BJ (cell line): ENCODE measurements at regions of chr20 and their contacts with region 1.

Region 1: GRCh38 chr20:46078954-46079353 is 10.8 kb downstream of the NCOA5 start:
- DNase-seq: no peak
- H3K4me3 ChIP-seq: no peak overlapping the region
- H3K27me3 ChIP-seq: no peaks in the 10 kb centered on the region
- CTCF ChIP-seq: no peak

Region 2: GRCh38 chr20:45833030-45833882 is 245.7 kb before region 1 on chr20 and contains the start of gene SNX21:
- CTCF ChIA-PET with region 1: no interaction called
- POLR2A ChIA-PET with region 1: no interaction called
- DNase-seq: peak; percentile 76
- H3K4me3 ChIP-seq: peak within 1 kb of the TSS; percentile 69
- H3K27me3 ChIP-seq: no peaks in the 10 kb centered on the region
- CTCF ChIP-seq: no peak
- polyA plus RNA-seq, gene SNX21: 13.6 and 17.8 TPM in 2 replicates

Region 3: DNA sequence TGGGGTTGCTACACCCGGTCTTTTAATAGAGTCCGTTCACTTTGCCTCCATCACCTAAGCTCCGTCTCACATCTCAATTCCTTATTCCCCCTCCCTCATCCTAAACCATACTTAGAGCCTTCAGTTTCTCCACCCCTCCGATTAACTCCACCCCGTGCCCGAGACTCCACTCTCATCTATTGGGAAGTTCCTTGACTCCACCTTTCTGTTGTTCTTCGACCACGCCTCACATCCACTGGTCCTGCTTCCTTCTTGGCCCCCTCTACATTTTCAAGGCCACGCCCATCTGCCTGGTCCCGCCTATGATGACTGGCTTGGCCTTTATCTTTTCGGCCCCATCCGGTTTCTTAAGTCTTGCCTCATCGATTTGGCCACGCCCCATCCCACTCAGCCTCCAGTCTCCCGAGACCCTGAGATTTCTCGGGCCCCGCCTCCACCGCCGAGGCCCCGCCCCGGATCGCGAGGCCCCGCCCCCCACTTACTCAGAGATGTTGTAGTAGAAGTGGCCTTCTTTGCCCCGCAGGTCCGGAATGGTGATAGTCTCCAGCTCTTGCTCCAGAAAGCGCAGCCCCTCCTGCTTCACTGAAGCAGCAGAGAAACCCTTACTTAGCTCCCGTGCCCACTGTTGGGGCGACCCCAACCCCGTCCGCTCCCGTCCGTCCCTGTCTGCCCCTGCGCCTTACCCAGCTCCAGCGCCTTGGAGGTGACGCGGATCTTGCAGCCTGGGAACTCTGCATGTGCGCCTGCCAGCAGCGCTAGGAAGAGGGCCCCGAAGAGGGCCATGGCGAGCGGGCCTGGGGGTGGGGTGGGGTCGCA is 168.1 kb before region 1 on chr20:
- CTCF ChIA-PET with region 1: no interaction called
- POLR2A ChIA-PET with region 1: no interaction called
- DNase-seq: peak; percentile 99
- H3K4me3 ChIP-seq: peak overlapping the region; percentile 25
- H3K27me3 ChIP-seq: no peaks in the 10 kb centered on the region
- CTCF ChIP-seq: no peak

Region 4: DNA sequence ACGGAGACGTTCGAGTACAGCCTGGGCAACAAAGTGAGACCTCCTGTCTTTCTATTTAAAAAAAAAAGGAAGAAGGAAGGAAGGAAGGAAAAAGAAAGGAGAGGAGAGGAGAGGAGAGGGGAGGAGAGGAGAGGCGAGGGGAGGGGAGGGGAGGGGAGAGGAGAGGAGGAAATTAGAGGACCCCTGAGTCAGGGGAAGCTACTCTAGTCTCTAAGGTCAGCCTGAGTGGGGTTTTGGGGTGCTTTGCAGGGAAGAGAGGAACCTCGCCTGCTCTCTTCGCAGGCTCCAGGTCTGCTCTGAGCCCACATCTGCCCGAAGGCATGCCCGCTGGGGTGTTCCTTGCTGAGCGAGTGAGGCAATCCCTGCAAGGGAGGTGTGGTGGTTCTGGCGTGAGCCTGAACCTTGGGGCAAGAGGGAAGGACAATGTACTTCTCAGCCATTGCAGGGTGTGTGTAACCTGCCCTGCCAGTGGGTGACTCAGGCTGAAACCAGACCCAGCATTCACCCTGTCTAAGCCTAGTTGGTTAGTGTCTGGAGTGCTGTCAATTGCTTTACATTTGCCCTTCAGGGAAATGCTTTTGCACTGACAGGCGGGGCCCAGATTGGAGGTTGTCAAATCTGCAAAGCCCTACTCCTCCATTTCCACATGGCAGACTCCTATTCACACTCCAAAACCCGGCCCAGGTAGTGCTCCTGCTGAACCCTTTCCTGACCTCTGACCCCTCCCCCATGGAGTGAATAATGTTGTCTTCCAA is 85.6 kb before region 1 on chr20:
- CTCF ChIA-PET with region 1: no interaction called
- POLR2A ChIA-PET with region 1: no interaction called
- DNase-seq: no peak
- H3K4me3 ChIP-seq: no peak overlapping the region
- H3K27me3 ChIP-seq: peaks cover 2% of the 10 kb centered on the region
- CTCF ChIP-seq: no peak

Region 5: GRCh38 chr20:46089417-46090388 is 10.7 kb after region 1 on chr20 and contains the start of gene NCOA5:
- CTCF ChIA-PET with region 1: interaction called, 11 read pairs
- POLR2A ChIA-PET with region 1: no interaction called
- DNase-seq: peak; percentile 73
- H3K4me3 ChIP-seq: peak within 1 kb of the TSS; percentile 79
- H3K27me3 ChIP-seq: no peaks in the 10 kb centered on the region
- CTCF ChIP-seq: 0 out of 2 replicates have a peak, but pooled peaks have one; percentile 15
- polyA plus RNA-seq, gene NCOA5: 19.0 and 19.9 TPM in 2 replicates

Region 6: DNA sequence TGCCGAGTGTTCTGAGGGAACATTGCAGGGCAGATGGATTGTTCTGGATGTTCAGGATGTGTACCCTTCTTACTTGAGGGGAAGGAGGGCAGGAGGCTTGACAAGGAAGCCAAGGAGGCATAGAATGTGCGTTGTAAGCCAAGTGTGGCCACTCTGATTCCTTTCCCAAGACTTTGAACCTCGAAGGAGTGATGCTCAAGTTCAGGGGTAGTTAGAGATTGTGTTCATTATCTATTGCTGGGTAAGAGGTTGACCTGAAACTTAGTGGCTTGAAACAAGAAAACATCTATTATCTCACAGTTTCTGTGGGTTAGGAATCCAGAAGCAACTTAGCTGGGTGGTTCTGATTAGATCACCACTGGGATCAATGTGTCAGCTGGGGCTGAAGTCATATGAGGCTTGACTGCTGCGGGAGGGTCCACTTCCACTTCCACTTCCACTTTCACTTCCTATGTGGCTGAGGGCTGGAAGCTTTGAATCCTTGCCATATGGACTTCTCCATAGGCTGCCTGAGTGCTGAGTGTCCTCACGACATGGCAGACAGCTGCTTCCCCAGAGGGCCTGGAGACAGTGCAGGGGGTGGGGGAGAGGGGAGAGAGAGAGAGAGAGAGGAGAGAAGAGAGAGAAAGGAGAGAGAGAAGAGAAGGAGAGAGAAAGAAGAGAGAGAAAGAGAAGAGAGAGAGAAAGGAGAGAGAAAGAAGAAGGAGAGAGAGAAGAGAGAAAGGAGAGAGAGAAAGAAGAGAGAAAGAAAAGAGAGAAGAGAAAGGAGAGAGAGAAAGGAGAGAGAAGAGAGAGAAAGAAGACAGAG is 32.3 kb after region 1 on chr20:
- CTCF ChIA-PET with region 1: no interaction called
- POLR2A ChIA-PET with region 1: no interaction called
- DNase-seq: no peak
- H3K4me3 ChIP-seq: no peak overlapping the region
- H3K27me3 ChIP-seq: peaks cover 15% of the 10 kb centered on the region
- CTCF ChIP-seq: no peak